Uterus (tissue), 4 donors: ENCODE measurements at regions of chr1 and their contacts with region 1.

Region 1: GRCh38 chr1:151739590-151740375 is 18.5 kb downstream of the RIIAD1 start:
- DNase-seq: no peak
- H3K4me3 ChIP-seq: no peak overlapping the region
- H3K27ac ChIP-seq: no peak overlapping the region
- H3K4me1 ChIP-seq: no peaks in the 10 kb centered on the region
- H3K27me3 ChIP-seq: no peaks in the 10 kb centered on the region
- CTCF ChIP-seq: no peak
- POLR2A ChIP-seq: no peak

Region 2: DNA sequence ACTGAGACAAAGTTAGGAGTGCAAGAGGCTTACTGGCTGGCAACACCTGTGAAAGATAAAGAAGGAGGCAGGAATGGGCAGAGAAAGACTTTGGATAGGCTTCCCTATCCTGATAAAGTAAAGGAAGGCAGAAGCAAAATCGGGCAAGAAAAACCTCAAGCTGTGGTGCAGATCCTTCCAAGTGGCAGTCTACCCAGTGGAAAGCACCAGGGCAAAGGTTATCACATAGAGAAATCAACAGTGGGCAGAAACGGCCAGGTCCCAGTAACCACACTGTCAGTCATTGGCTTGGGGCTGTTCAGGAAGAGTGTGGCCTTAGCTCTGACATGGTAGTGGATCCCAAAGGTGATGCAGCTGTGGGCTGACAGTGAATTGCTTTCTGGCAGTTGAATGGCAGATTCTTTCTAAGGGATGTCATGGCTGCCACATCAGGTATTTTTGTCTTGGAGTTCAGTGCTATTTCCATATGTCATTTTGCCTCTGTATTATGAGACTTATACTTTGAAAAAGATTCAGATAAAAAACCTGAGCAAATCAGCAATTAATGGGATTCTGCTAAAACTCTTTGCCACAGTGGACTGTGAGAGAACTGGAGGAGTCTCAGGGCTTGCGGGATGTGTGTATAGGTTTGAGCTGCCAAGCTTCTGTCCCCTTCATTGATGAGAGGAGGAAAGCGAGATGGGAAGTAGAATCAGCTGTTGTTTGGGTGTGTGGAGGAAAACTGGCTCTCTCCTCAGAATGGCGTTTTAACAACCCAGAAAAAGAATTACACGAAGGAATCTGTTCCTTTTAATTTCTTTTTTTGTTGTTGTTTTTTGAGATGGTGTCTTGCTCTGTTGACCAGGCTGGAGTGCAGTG is 236.6 kb before region 1 on chr1:
- intact Hi-C with region 1: no loop called
- DNase-seq: no peak
- H3K4me3 ChIP-seq: no peak overlapping the region
- H3K27ac ChIP-seq: no peak overlapping the region
- H3K4me1 ChIP-seq: no peaks in the 10 kb centered on the region
- H3K27me3 ChIP-seq: no peaks in the 10 kb centered on the region
- CTCF ChIP-seq: no peak
- POLR2A ChIP-seq: no peak

Region 3: GRCh38 chr1:151594143-151594625 is 145.6 kb before region 1 on chr1:
- intact Hi-C with region 1: loop called (anchors 10 kb)
- DNase-seq: peak; percentile 67 to 72
- H3K4me3 ChIP-seq: no peak overlapping the region
- H3K27ac ChIP-seq: no peak overlapping the region
- H3K4me1 ChIP-seq: no peaks in the 10 kb centered on the region
- H3K27me3 ChIP-seq: no peaks in the 10 kb centered on the region
- CTCF ChIP-seq: peak; percentile 74 to 96 (median 78)
- POLR2A ChIP-seq: no peak